Ascending aorta (tissue), 2 donors: ENCODE measurements at regions of chr17 and their contacts with region 1.

Region 1: GRCh38 chr17:82781894-82782274 is 30.0 kb downstream of the TBCD start:
- DNase-seq: peak in 1 of 2 donors; percentile 86
- H3K4me3 ChIP-seq: no peak overlapping the region
- H3K27ac ChIP-seq: no peak overlapping the region
- H3K4me1 ChIP-seq: no peaks in the 10 kb centered on the region
- H3K27me3 ChIP-seq: no peaks in the 10 kb centered on the region
- CTCF ChIP-seq: peak; percentile 86 to 95 (median 93)

Region 2: GRCh38 chr17:82917691-82918345 is 135.9 kb after region 1 on chr17:
- intact Hi-C with region 1: loop called (anchors 5 kb)
- DNase-seq: no peak
- H3K4me3 ChIP-seq: no peak overlapping the region
- H3K27ac ChIP-seq: no peak overlapping the region
- H3K4me1 ChIP-seq: no peaks in the 10 kb centered on the region
- H3K27me3 ChIP-seq: no peaks in the 10 kb centered on the region
- CTCF ChIP-seq: no peak

Region 3: DNA sequence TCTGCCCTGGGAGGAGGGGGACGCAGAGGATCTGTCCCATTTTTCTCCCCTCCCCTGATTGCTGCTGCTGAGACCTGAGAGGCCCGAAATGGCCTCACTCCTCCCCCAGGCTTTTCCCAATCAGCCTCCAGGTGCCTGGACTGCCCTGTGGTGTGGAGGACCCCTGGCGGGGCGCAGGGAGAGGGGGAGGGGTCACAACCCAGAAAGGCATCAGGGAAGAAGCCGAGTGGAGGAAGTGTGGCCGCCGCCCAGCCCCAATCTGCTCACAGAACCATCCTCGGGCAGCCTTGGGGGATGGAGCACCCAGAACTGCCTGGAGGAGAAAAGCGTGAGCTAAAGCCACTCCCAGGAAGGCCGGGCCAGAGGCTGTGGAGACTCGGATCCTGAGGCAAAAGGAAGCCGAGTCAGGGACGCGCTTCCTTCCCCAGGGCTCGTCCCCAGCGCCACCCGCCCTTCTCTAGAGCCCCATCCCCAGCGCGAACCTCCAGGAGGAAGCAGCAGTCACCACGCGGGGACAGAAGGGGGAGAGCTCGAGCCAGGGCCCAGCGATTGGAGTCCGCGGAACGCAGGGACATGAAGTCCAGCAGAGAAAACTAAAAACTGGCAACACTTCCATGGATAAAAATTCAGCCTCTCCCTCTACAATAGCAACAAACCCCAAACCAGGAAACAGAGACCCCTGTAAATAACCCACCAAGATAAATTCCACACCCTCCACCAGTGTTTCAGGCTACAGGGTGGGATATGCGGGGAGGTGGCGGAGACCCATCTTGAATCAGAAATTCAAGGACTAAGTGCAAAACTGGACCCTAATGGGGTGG is 181.2 kb after region 1 on chr17:
- intact Hi-C with region 1: loop called (anchors 2 kb)
- DNase-seq: peak in 1 of 2 donors; percentile 89
- H3K4me3 ChIP-seq: peak overlapping the region; percentile 28 to 34
- H3K27ac ChIP-seq: peak overlapping the region in 1 of 2 donors; percentile 78
- H3K4me1 ChIP-seq: peaks cover 0 to 9% of the 10 kb centered on the region in 2 donors
- H3K27me3 ChIP-seq: no peaks in the 10 kb centered on the region
- CTCF ChIP-seq: peak; percentile 77 to 89 (median 79)

Region 4: GRCh38 chr17:83109793-83110645 is 328.1 kb after region 1 on chr17:
- intact Hi-C with region 1: no loop called
- DNase-seq: peak; percentile 74 to 99
- H3K4me3 ChIP-seq: peak overlapping the region; percentile 46 to 73
- H3K27ac ChIP-seq: peak overlapping the region; percentile 94 to 96
- H3K4me1 ChIP-seq: peaks cover 14 to 39% of the 10 kb centered on the region in 2 donors
- H3K27me3 ChIP-seq: no peaks in the 10 kb centered on the region
- CTCF ChIP-seq: no peak